Dendritic cell treated with granulocyte-macrophage colony-stimulating factor and Interleukin-4, amounts not matched to agents 40 ng/mL and 50 ng/mL, for 4 days (primary cell): ENCODE measurements at regions of chr12 and their contacts with region 1.

Region 1: GRCh38 chr12:51424662-51425438 is at the start of gene SLC4A8:
- H3K4me3 Mint-ChIP-seq: peak within 1 kb of the TSS; percentile 63
- H3K27ac Mint-ChIP-seq: no peak within 1 kb of the TSS
- H3K4me1 Mint-ChIP-seq: peaks cover 12% of the 10 kb centered on the region
- H3K27me3 Mint-ChIP-seq: peaks cover 31% of the 10 kb centered on the region

Region 2: GRCh38 chr12:49990273-49990672 is 1434.6 kb before region 1 on chr12:
- intact Hi-C with region 1: no loop called
- H3K4me3 Mint-ChIP-seq: no peak overlapping the region
- H3K27ac Mint-ChIP-seq: peak overlapping the region; percentile 52
- H3K4me1 Mint-ChIP-seq: peaks cover 54% of the 10 kb centered on the region
- H3K27me3 Mint-ChIP-seq: no peaks in the 10 kb centered on the region

Region 3: GRCh38 chr12:51334764-51335163 is 90.1 kb before region 1 on chr12:
- intact Hi-C with region 1: no loop called
- H3K4me3 Mint-ChIP-seq: no peak overlapping the region
- H3K27ac Mint-ChIP-seq: peak overlapping the region; percentile 36
- H3K4me1 Mint-ChIP-seq: peaks cover 32% of the 10 kb centered on the region
- H3K27me3 Mint-ChIP-seq: peaks cover 15% of the 10 kb centered on the region

Region 4: GRCh38 chr12:51471111-51471864 is 46.4 kb after region 1 on chr12:
- intact Hi-C with region 1: no loop called
- H3K4me3 Mint-ChIP-seq: no peak overlapping the region
- H3K27ac Mint-ChIP-seq: no peak overlapping the region
- H3K4me1 Mint-ChIP-seq: peaks cover 7% of the 10 kb centered on the region
- H3K27me3 Mint-ChIP-seq: no peaks in the 10 kb centered on the region

Region 5: GRCh38 chr12:51482929-51483697 is 58.3 kb after region 1 on chr12:
- intact Hi-C with region 1: no loop called
- H3K4me3 Mint-ChIP-seq: no peak overlapping the region
- H3K27ac Mint-ChIP-seq: no peak overlapping the region
- H3K4me1 Mint-ChIP-seq: no peaks in the 10 kb centered on the region
- H3K27me3 Mint-ChIP-seq: no peaks in the 10 kb centered on the region

Region 6: DNA sequence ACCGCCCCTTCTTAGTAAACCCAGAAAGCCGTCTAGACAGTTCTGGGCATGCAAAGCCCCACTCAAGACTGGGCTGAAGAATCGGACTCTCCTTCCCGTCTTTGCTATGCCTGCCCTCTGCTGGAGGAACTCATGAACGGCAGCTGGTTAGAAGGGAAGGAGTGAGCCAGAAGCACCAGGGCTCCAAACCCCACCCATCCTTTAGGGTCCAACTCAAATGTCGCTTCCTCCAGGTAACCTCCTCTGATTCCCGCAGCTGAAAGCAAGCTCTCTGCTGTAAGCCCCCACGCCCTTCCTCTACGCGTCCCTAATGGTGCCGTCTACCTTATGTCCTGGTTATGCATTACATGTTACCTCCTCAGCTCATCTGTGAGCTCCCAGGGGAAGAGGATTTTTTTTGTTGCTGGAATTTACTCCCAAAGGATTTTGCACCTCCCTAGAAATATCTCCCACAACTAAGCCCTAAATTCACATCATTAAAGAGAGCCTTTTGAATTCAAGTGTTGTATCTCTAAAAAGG is 107.2 kb after region 1 on chr12:
- intact Hi-C with region 1: loop called (anchors 1 kb)
- H3K4me3 Mint-ChIP-seq: no peak overlapping the region
- H3K27ac Mint-ChIP-seq: no peak overlapping the region
- H3K4me1 Mint-ChIP-seq: peaks cover 39% of the 10 kb centered on the region
- H3K27me3 Mint-ChIP-seq: peaks cover 36% of the 10 kb centered on the region

Region 7: DNA sequence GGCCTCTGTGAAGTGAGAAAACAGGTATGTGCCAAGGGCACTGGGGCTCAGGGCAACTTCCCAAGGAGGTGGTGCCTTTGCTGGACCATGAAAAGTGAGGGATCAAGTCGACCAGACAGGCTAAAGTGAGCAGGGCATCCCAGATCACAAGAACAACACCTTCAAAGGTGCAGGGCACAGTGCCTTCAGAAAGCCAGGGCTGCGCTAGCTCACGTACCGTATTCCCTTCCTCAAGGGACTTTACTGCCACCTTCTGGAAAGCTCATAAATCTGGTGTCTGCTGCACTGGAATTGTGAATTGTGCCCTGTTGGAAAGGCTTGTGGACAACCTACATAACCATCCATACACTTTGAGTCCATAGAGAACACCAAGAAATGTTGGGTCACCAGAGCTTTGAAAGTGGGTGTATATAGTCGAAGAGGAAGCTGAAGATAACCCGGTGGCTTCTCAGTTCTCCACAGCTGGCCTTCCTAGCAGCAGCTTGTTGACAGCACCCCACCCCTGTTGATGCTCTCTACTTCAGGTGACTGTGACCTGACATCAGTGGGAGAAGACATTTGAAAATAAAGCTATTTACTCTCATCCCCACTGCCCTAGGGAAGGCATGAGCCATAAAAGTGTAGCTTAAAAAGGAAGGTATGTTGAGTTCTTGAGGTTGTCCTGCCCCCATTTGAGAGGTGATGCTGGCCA is 399.2 kb after region 1 on chr12:
- intact Hi-C with region 1: loop called (anchors 2 kb)
- H3K4me3 Mint-ChIP-seq: no peak overlapping the region
- H3K27ac Mint-ChIP-seq: no peak overlapping the region
- H3K4me1 Mint-ChIP-seq: peaks cover 68% of the 10 kb centered on the region
- H3K27me3 Mint-ChIP-seq: peaks cover 30% of the 10 kb centered on the region

Region 8: DNA sequence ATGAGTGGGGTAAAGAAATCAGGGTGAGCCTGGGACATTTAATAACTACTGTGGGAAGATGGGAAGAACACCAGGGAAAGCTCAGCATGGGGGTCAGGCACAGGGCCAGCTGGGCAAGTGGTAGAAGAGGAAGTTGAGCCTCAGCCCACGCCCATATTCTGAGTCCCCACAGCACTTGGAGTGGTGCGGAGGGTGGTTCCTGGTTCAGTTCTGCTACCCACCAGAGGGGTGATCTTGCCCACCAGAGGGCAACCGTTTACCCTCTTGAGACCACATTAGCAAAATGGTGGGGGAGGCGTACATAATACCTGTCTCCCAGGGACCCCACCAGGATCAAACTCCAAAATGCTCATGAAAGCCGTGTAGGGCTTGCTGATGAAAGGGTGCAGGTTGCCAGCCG is 446.3 kb after region 1 on chr12:
- intact Hi-C with region 1: loop called (anchors 1 kb)
- H3K4me3 Mint-ChIP-seq: no peak overlapping the region
- H3K27ac Mint-ChIP-seq: no peak overlapping the region
- H3K4me1 Mint-ChIP-seq: peaks cover 55% of the 10 kb centered on the region
- H3K27me3 Mint-ChIP-seq: peaks cover 38% of the 10 kb centered on the region